Right ventricle myocardium superior (tissue), 1 donor: ENCODE measurements at regions of chr1 and their contacts with region 1.

Region 1: GRCh38 chr1:174262349-174263241 is 103.3 kb downstream of the RABGAP1L start:
- DNase-seq: no peak
- ATAC-seq: peak; percentile 63

Region 2: DNA sequence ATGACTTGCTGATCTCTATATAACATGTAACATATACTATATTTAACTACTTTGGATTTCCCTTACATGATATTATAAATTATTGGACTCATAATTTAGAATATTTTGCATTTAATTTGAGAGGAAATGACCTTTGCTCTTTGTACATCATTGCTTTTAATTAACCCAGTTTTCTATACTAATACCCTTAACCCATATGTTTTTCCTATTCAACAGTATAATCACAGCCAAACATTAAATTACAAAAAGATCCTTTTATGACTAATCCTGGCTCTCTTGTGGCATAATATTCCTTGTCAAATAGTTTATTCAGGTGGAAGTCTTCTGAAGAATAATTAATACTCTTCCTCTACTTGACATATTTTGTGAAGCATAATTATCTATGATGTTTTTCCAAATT is 129.1 kb after region 1 on chr1:
- intact Hi-C with region 1: no loop called
- DNase-seq: no peak
- ATAC-seq: no peak

Region 3: GRCh38 chr1:174726167-174726879 is 463.7 kb after region 1 on chr1:
- intact Hi-C with region 1: loop called (anchors 5 kb)
- DNase-seq: no peak
- ATAC-seq: no peak

Region 4: DNA sequence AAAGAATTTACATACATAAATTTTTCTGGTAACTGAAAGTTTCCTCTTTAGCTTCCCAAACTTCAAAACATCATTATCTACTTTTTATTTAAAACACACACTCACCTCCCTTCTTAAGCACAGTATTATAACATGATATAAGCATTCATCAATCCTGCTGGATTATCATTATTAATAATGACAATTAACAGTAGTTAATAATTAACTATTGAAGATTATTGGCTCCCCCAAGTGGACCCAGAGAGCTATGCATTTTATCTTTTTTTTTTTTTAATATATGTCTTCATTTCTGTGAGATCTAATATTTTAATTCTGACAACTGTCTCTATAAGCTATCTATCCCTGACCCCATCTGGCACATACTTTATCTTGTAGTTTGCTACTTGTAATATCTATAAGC is 485.0 kb after region 1 on chr1:
- intact Hi-C with region 1: loop called (anchors 5 kb)
- DNase-seq: no peak
- ATAC-seq: no peak